ENCODE measurements at regions of chr6 and their contacts with region 1.

Region 1: DNA sequence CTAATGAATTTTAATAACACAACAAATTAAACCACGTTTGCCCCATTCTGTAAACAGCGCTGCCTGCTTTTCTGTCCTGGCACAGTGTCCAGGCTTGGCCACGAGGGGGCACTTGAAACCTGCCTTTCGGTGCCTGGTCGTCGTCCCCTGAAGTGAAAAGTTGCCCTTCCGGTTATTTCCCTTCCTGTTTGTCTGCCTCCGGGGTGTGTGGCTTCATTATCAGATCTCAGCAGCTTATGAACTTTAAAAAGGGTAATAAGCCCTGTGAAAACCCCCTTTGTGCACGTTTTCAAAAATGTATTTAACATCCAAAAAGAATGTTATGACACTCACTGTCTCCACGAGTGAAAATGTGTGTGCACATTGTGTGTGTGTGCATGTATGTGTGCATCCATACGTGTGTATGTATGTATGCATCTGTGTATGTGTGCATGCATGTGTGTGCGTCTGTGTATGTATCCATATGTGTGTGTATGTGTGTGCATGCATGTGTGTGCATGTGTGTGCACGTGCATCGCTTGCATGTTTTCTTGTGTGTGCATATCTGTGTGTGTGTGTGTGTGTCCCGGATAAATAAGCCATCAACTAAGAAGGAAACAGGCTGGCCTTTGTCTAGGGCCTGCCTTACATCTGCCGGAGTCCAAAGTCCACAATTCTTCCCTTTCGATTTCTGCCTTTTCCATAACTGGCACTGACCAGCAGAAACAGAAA is 358.4 kb downstream of the THBS2 start:
- DNase-seq: peak; percentile 57 to 76 (median 72)
- ATAC-seq: peak; percentile 94
- H3K4me3 ChIP-seq: peak overlapping the region; percentile 49
- H3K4me3 Mint-ChIP-seq: peak overlapping the region; percentile 12 to 79 (median 70)
- H3K27ac ChIP-seq: no peak overlapping the region
- H3K27ac Mint-ChIP-seq: peak overlapping the region; percentile 24 to 83 (median 71)
- H3K4me1 ChIP-seq: peaks cover 6% of the 10 kb centered on the region in 2 donors
- H3K4me1 Mint-ChIP-seq: peaks cover 7 to 24% (median 15%) of the 10 kb centered on the region in 7 donors
- H3K27me3 ChIP-seq: no peaks in the 10 kb centered on the region
- H3K27me3 Mint-ChIP-seq: peaks cover 0 to 3% (median 0%) of the 10 kb centered on the region in 5 donors

Region 2: DNA sequence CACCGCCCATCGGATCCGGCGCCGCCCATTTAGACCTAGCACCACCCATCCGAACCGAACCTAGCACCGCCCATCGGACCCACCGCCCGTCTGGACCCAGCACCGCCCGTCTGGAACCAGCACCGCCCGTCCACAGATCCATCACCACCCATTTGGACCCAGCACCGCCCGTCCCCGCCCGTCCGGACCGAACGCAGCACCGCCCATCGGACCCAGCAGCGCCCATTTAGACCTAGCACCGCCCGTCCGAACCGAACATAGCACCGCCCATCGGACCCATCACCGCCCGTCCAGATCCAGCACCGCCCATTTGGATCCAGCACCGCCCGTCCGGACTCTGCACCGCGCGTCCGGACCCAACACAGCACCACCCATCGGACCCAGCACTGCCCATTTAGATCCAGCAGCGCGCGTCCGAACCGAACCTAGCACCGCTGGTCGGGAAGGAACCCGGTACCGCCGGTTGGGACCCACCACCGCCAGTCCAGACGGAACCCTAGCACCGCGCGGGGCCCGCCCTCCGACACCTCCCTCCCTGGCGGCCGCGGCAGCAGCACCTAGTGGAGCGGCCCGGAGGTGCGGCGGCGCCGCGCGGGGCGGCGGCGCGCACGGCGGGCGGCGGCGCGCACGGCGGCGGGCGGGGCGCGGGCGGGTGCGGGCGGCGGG is 1068.9 kb before region 1 on chr6:
- CTCF ChIA-PET with region 1: no interaction called
- POLR2A ChIA-PET with region 1: no interaction called
- intact Hi-C with region 1: loop called in 1 of 2 experiments (anchors 5 kb)
- DNase-seq: peak; percentile 11 to 73 (median 55)
- ATAC-seq: peak; percentile 97
- H3K4me3 ChIP-seq: peak overlapping the region; percentile 66
- H3K4me3 Mint-ChIP-seq: peak overlapping the region; percentile 83 to 91 (median 85)
- H3K27ac ChIP-seq: no peak overlapping the region
- H3K27ac Mint-ChIP-seq: peak overlapping the region in 4 of 9 donors; percentile 44 to 69 (median 60)
- H3K4me1 ChIP-seq: peaks cover 0 to 14% of the 10 kb centered on the region in 2 donors
- H3K4me1 Mint-ChIP-seq: peaks cover 5 to 43% (median 26%) of the 10 kb centered on the region in 7 donors
- H3K27me3 ChIP-seq: peaks cover 0 to 27% of the 10 kb centered on the region in 2 donors
- H3K27me3 Mint-ChIP-seq: peaks cover 49 to 81% (median 69%) of the 10 kb centered on the region in 5 donors

Region 3: DNA sequence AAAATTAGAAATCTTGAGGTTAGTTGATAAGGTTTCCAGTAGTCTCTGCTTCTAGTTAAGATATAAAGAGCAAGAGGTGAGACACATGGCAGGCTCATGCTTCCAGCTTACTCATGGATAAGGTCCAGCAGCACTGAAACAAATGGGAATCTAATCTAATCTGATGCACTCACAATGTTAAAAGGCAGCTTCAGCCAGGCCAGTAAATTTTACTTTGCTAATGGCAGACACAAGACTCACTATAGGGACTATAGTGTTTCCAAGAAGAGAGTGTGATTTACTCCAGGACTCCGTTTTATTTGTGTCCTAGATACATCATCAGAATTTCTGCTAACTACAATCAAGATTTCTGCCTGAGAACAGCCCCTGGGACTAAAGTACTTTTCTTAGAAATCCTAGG is 129.5 kb before region 1 on chr6:
- CTCF ChIA-PET with region 1: no interaction called
- POLR2A ChIA-PET with region 1: no interaction called
- intact Hi-C with region 1: no loop called
- DNase-seq: no peak
- ATAC-seq: no peak
- H3K4me3 ChIP-seq: no peak overlapping the region
- H3K4me3 Mint-ChIP-seq: no peak overlapping the region
- H3K27ac ChIP-seq: no peak overlapping the region
- H3K27ac Mint-ChIP-seq: no peak overlapping the region
- H3K4me1 ChIP-seq: no peaks in the 10 kb centered on the region
- H3K4me1 Mint-ChIP-seq: no peaks in the 10 kb centered on the region
- H3K27me3 ChIP-seq: no peaks in the 10 kb centered on the region
- H3K27me3 Mint-ChIP-seq: peaks cover 0 to 13% (median 3%) of the 10 kb centered on the region in 5 donors

Region 4: GRCh38 chr6:169639653-169640278 is 744.5 kb after region 1 on chr6:
- CTCF ChIA-PET with region 1: no interaction called
- POLR2A ChIA-PET with region 1: no interaction called
- intact Hi-C with region 1: loop called in 1 of 2 experiments (anchors 10 kb)
- DNase-seq: no peak
- ATAC-seq: no peak
- H3K4me3 ChIP-seq: no peak overlapping the region
- H3K4me3 Mint-ChIP-seq: no peak overlapping the region
- H3K27ac ChIP-seq: no peak overlapping the region
- H3K27ac Mint-ChIP-seq: no peak overlapping the region
- H3K4me1 ChIP-seq: no peaks in the 10 kb centered on the region
- H3K4me1 Mint-ChIP-seq: no peaks in the 10 kb centered on the region
- H3K27me3 ChIP-seq: no peaks in the 10 kb centered on the region
- H3K27me3 Mint-ChIP-seq: no peaks in the 10 kb centered on the region

Region 5: DNA sequence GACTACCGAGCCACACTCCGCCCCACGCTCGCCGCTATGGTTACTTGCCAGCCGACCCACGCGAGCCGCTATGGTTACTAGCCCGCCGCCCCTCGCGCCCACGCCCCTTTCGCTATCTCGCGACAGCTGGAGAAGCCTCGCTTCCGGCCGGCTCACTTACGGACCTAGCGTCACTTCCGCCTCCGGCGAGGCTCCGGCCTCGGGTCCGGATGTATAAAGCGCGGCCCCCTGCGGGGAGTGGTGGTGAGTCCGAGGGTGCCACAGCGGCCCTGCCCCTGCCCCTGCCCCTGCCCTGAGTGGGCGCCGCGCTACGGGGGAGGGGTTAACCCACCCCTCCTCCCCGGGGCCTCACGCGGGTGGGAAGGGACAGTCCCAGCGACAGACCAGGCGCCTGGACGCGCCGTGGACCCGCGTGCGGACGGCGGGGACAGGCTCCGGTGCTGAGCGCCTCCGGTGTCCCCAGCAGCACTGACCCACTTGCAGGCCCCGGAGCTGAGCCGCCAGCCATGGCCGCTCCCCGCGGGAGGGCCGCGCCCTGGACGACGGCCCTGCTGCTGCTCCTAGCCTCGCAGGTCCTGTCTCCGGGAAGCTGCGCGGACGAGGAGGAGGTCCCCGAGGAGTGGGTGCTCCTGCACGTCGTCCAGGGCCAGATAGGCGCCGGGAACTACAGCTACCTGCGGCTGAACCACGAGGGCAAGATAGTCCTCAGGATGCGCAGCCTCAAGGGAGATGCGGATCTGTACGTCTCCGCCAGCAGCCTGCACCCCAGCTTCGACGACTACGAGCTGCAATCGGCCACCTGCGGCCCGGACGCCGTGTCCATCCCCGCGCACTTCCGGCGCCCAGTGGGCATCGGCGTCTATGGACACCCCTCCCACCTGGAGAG is 806.9 kb after region 1 on chr6 and contains the starts of genes C6orf120 and WDR27:
- CTCF ChIA-PET with region 1: no interaction called
- POLR2A ChIA-PET with region 1: no interaction called
- intact Hi-C with region 1: loop called (anchors 1 to 5 kb)
- DNase-seq: peak; percentile 91 to 98 (median 94)
- ATAC-seq: peak; percentile 93
- H3K4me3 ChIP-seq: peak within 1 kb of the TSS; percentile 95
- H3K4me3 Mint-ChIP-seq: peak within 1 kb of the TSS; percentile 89 to 94 (median 92)
- H3K27ac ChIP-seq: peak within 1 kb of the TSS; percentile 98
- H3K27ac Mint-ChIP-seq: peak within 1 kb of the TSS; percentile 88 to 96 (median 93)
- H3K4me1 ChIP-seq: peaks cover 22 to 36% of the 10 kb centered on the region in 2 donors
- H3K4me1 Mint-ChIP-seq: peaks cover 28 to 66% (median 55%) of the 10 kb centered on the region in 7 donors
- H3K27me3 ChIP-seq: no peaks in the 10 kb centered on the region
- H3K27me3 Mint-ChIP-seq: no peaks in the 10 kb centered on the region
- total RNA-seq, gene C6orf120: 16.0 to 38.1 (median 19.3) TPM
- total RNA-seq, gene WDR27: 22.7 to 89.0 (median 41.4) TPM

Region 6: DNA sequence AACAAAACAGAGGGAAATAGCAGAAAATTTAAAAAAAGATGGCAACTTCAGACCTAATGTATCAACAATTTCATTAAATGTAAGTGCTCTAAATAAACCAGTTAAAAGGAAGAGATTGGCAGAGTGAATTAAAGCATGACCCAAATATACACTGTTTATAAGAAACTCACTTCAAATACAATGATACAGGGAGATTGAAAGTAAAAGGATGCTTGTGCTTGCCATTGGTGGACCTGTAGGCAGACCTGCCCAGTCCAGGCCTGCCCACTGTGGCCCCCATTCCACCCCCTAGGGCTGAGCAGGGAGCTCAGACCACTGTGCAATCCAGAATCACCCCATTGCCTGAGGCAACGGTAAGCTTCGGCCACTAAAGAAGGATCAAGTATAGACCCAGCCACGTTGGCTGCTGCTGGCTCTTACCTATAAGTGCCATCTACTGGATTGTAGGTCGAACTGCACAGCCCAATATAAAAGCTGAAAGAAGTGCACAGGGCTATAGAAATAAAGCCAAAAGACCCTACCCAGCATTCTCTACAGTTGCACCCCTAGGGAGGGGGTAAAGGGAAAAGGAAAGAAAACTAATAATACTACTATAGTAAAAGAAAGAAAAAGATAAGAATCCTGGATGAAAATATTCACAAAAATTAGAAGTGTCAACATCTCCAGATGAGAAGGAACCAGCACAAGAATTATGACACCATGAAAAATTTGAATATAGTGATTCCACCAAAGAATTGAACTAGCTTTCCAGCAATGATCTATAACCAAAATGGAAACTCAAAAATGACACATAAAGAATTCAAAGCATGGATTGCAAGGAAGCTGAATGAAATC is 1621.7 kb after region 1 on chr6:
- CTCF ChIA-PET with region 1: no interaction called
- POLR2A ChIA-PET with region 1: no interaction called
- intact Hi-C with region 1: loop called (anchors 1 kb)
- DNase-seq: peak; percentile 9 to 56 (median 45)
- ATAC-seq: peak; percentile 90
- H3K4me3 ChIP-seq: peak overlapping the region; percentile 45
- H3K4me3 Mint-ChIP-seq: peak overlapping the region in 8 of 10 donors; percentile 35 to 78 (median 60)
- H3K27ac ChIP-seq: no peak overlapping the region
- H3K27ac Mint-ChIP-seq: peak overlapping the region in 1 of 9 donors; percentile 13
- H3K4me1 ChIP-seq: peaks cover 0 to 3% of the 10 kb centered on the region in 2 donors
- H3K4me1 Mint-ChIP-seq: peaks cover 0 to 2% (median 0%) of the 10 kb centered on the region in 7 donors
- H3K27me3 ChIP-seq: no peaks in the 10 kb centered on the region
- H3K27me3 Mint-ChIP-seq: peaks cover 12 to 70% (median 40%) of the 10 kb centered on the region in 5 donors

Measured in naive thymus-derived CD4-positive, alpha-beta T cell (primary cell).